Activated CD8-positive, alpha-beta T cell treated with anti-CD3 and anti-CD28 coated beads for 36 hours (primary cell): ENCODE measurements at regions of chr16 and their contacts with region 1.

Region 1: DNA sequence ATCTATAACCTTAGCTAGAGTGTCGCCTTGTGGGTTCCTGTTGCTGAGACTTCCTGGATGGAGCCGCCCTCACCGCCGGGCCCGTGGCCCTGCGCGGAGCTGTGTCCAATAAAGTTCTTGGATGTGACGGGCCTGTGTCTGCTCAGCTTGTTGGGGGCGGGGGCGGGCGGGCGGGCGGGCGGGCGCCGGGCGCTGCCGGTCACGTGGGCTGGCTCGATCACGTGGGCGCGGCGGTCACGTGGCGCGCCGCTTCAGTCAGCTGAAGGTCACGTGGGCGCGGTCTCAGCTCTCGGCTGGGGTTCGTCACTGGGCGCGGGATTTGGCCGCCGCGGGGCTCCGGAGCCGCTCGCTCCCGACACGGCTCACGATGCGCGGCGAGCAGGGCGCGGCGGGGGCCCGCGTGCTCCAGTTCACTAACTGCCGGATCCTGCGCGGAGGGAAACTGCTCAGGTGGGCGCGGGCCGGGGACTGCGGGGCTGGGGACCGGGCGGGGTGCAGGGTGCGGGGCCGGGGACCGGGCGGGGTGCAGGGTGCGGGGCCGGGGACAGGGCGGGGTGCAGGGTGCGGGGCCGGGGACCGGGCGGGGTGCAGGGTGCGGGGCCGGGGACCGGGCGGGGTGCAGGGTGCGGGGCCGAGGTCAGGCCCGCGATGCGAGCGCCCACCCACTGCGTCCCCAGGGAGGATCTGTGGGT is at the start of gene AMDHD2:
- DNase-seq: peak; percentile 94
- ATAC-seq: peak; percentile 71
- H3K4me3 Mint-ChIP-seq: peak within 1 kb of the TSS; percentile 83
- H3K27ac Mint-ChIP-seq: peak within 1 kb of the TSS; percentile 92
- H3K4me1 Mint-ChIP-seq: peaks cover 49% of the 10 kb centered on the region
- H3K27me3 Mint-ChIP-seq: no peaks in the 10 kb centered on the region
- CTCF ChIP-seq: no peak
- total RNA-seq, gene AMDHD2: 28.2 to 29.0 TPM

Region 2: DNA sequence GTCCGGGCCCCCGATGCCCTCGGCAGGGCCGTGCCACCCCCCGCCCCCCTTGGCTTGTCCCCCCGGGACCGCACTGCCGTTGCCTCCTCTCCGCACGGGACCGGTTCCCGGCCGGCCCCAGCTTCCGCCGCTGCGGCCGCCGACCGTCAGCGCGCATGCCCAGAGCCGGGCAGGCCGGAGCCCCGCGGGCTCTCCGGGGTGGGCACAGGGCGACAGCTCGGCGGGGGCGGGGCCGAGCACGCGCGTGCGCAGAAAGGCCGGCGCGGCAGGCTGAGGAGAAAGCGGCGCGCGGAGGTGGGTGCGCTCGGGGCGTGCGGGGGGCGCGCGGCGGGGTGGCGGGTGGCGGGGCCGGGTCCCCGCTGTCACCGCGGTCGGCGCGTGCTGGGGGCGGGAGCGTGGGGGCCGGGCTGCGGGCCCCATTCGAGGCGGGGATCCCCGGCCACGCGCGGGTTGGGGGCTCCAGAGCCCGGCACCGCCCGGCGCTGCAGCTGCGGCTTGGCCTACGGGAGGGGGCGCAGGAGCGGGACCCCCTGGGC is 45.3 kb before region 1 on chr16 and contains the start of gene TBC1D24:
- CTCF ChIA-PET with region 1: no interaction called
- POLR2A ChIA-PET with region 1: no interaction called
- intact Hi-C with region 1: no loop called
- DNase-seq: peak; percentile 85
- ATAC-seq: peak; percentile 72
- H3K4me3 Mint-ChIP-seq: peak within 1 kb of the TSS; percentile 76
- H3K27ac Mint-ChIP-seq: peak within 1 kb of the TSS; percentile 72
- H3K4me1 Mint-ChIP-seq: peaks cover 25% of the 10 kb centered on the region
- H3K27me3 Mint-ChIP-seq: peaks cover 16% of the 10 kb centered on the region
- CTCF ChIP-seq: no peak
- total RNA-seq, gene TBC1D24: 16.6 to 16.7 TPM

Region 3: DNA sequence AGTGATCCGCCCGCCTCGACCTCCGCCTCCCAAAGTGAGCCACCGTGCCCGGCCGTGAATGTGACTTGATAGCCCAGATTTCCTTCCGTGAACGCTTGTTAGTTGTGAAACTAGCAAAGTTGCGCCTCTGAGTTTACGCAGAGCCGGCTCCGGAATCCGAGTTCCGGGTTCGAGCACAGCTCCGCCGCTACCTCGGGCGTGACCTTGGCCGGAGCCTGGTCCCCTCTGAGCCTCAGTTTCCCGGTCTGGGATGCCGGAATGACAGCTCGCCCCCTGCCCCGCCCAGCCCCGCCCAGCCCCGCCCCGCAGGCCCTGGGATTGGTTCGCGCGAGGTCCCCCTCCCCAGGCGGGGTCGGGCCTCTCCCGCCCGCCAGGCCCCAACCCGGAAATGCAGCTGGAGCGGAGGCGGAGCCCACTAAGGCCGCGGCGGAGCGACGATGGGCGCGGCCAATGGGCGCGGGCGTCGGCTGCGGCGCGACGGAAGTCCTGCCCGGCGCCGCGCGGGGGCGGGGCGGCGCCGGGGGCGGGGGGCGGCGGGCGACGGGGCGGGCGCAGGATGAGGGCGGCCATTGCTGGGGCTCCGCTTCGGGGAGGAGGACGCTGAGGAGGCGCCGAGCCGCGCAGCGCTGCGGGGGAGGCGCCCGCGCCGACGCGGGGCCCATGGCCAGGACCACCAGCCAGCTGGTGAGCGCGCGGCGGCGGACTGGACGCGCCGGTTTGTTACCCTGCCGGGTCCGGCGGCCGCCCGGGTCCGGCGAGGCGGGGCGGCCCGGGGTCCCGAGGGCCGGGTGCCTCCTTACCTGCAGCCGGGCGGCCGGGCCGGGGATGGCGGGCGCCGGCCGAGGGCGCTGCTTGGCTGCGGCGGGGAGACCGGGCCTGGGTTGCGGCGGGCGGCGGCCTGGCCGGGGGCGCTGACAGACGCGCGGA is 17.5 kb after region 1 on chr16 and contains the start of gene PDPK1:
- CTCF ChIA-PET with region 1: interaction called, 4 read pairs
- POLR2A ChIA-PET with region 1: interaction called, 67 read pairs
- intact Hi-C with region 1: no loop called
- DNase-seq: peak; percentile 95
- ATAC-seq: peak; percentile 93
- H3K4me3 Mint-ChIP-seq: peak within 1 kb of the TSS; percentile 82
- H3K27ac Mint-ChIP-seq: peak within 1 kb of the TSS; percentile 90
- H3K4me1 Mint-ChIP-seq: peaks cover 39% of the 10 kb centered on the region
- H3K27me3 Mint-ChIP-seq: no peaks in the 10 kb centered on the region
- CTCF ChIP-seq: no peak
- total RNA-seq, gene PDPK1: 32.4 to 33.9 TPM